ENCODE measurements at regions of chr15 and their contacts with region 1.

Region 1: GRCh38 chr15:50675536-50676144 is 11.0 kb downstream of the TRPM7 start:
- DNase-seq: peak in 1 of 3 donors; percentile 33
- ATAC-seq: no peak
- H3K4me3 ChIP-seq: no peak overlapping the region
- H3K4me1 ChIP-seq: peaks cover 2% of the 10 kb centered on the region
- CTCF ChIP-seq: peak; percentile 65

Region 2: DNA sequence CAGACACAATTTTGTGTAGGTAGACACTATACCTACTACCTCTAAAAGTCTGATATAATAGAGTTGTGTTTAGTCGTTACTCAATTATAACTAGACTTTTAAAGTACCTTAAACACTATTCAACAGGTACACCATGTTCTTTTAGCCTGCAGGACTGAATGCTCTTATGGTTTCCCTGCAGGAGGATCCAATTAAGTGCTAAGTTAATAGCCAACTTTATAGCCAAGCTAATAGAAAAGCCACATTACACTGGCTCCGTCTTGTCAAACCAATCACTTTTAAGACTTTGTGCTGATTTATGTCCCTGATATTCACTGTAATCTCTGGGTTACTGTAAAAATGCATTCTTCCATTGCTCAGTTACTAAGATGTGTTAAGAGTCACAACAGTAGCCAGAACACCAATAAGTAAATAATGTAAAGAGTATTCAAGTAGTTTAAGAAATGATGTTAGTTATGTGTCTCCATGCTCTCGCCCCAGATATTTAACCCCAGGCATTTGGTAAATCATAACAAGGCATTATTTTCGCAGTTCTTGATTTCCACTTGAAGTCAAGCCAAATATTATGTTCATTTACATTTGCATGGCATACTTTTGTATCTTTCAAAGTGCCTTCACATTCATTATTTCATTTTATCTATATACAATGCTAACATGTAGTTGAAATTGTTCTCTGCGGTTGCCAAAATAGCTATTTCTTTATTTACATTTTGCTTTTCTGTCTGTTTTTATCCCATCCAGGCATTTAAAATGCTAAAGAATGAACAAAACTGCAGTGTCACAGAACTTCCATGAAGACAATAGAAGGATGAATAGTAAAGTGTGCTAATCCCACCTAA is 190.1 kb after region 1 on chr15:
- intact Hi-C with region 1: no loop called
- DNase-seq: no peak
- ATAC-seq: no peak
- H3K4me3 ChIP-seq: no peak overlapping the region
- H3K4me1 ChIP-seq: peaks cover 9% of the 10 kb centered on the region
- CTCF ChIP-seq: no peak

Region 3: DNA sequence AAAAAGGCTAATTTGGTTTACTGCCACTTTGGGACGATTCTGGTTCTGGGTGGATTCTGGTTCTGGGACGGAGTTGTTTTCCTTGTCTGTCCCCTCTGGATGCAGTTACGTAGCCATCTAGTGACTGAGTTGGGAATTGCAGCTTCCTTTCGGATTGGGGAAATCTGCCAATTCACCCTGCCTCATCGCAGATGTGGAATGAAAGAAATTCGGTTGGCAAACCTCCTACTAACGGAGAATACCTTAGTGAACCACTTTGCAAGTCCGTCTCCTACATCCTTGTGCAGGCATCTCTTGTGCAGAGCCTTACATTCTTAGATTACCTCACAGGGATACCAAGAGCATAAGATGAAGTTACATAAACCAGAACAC is 201.3 kb after region 1 on chr15:
- intact Hi-C with region 1: loop called in 1 of 2 experiments (anchors 5 kb)
- DNase-seq: peak in 2 of 3 donors; percentile 51 to 94
- ATAC-seq: peak; percentile 81
- H3K4me3 ChIP-seq: no peak overlapping the region
- H3K4me1 ChIP-seq: peaks cover 12% of the 10 kb centered on the region
- CTCF ChIP-seq: peak; percentile 94

Region 4: GRCh38 chr15:50886140-50886467 is 210.5 kb after region 1 on chr15:
- intact Hi-C with region 1: loop called in 1 of 2 experiments (anchors 5 kb)
- DNase-seq: no peak
- ATAC-seq: no peak
- H3K4me3 ChIP-seq: no peak overlapping the region
- H3K4me1 ChIP-seq: no peaks in the 10 kb centered on the region
- CTCF ChIP-seq: no peak

Region 5: DNA sequence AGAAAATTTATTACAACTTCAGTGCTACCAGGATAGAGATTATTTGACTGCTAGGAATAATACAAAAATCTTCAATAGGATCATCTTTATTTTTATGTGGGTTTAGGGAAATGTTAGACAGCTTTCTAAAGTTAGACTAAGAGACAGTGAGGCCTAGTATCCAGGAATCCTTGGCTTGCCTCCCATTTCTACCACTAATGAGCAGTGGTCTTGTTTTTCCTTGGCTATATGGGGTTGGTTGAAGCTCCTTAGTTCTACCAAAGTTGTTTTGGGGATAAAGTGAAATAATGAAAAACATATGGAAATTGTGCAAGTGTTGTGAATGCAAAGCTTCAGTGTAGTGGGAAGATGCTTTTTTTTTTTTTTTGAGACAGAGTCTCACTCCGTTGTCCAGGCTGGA is 249.6 kb after region 1 on chr15:
- intact Hi-C with region 1: no loop called
- DNase-seq: no peak
- ATAC-seq: no peak
- H3K4me3 ChIP-seq: no peak overlapping the region
- H3K4me1 ChIP-seq: no peaks in the 10 kb centered on the region
- CTCF ChIP-seq: no peak